ENCODE measurements at regions of chr7 and their contacts with region 1.

Region 1: GRCh38 chr7:7929470-7929869 is 39.1 kb upstream of the GLCCI1 start:
- DNase-seq: no peak
- H3K4me3 ChIP-seq: no peak overlapping the region
- H3K4me3 Mint-ChIP-seq: no peak overlapping the region
- H3K27ac ChIP-seq: no peak overlapping the region
- H3K27ac Mint-ChIP-seq: no peak overlapping the region
- H3K4me1 ChIP-seq: peaks cover 8% of the 10 kb centered on the region
- H3K4me1 Mint-ChIP-seq: peaks cover 2 to 9% (median 5%) of the 10 kb centered on the region in 4 donors
- H3K27me3 ChIP-seq: no peaks in the 10 kb centered on the region
- H3K27me3 Mint-ChIP-seq: no peaks in the 10 kb centered on the region

Region 2: GRCh38 chr7:7944619-7945282 is 15.3 kb after region 1 on chr7:
- CTCF ChIA-PET with region 1: interaction called, 3 read pairs
- POLR2A ChIA-PET with region 1: interaction called, 6 read pairs
- intact Hi-C with region 1: loop called (anchors 1 kb)
- DNase-seq: peak; percentile 64 to 77 (median 75)
- H3K4me3 ChIP-seq: peak overlapping the region; percentile 26 to 29
- H3K4me3 Mint-ChIP-seq: peak overlapping the region; percentile 70 to 89 (median 82)
- H3K27ac ChIP-seq: peak overlapping the region; percentile 59
- H3K27ac Mint-ChIP-seq: peak overlapping the region; percentile 78 to 97 (median 90)
- H3K4me1 ChIP-seq: peaks cover 42% of the 10 kb centered on the region
- H3K4me1 Mint-ChIP-seq: peaks cover 21 to 51% (median 28%) of the 10 kb centered on the region in 4 donors
- H3K27me3 ChIP-seq: no peaks in the 10 kb centered on the region
- H3K27me3 Mint-ChIP-seq: no peaks in the 10 kb centered on the region

Measured in CD4-positive, alpha-beta memory T cell (primary cell).